ENCODE measurements at regions of chr4 and their contacts with region 1.

Region 1: GRCh38 chr4:141307241-141307689 is 86.6 kb downstream of the ZNF330 start:
- DNase-seq: peak; percentile 8
- H3K4me3 ChIP-seq: no peak overlapping the region
- H3K27ac ChIP-seq: no peak overlapping the region
- H3K27me3 ChIP-seq: no peaks in the 10 kb centered on the region
- CTCF ChIP-seq: peak; percentile 75

Region 2: GRCh38 chr4:141133146-141133998 is 173.9 kb before region 1 on chr4 and contains the start of gene RNF150:
- CTCF ChIA-PET with region 1: no interaction called
- POLR2A ChIA-PET with region 1: no interaction called
- DNase-seq: peak; percentile 78
- H3K4me3 ChIP-seq: peak within 1 kb of the TSS; percentile 82
- H3K27ac ChIP-seq: no peak within 1 kb of the TSS
- H3K27me3 ChIP-seq: no peaks in the 10 kb centered on the region
- CTCF ChIP-seq: peak; percentile 87
- polyA plus RNA-seq, gene RNF150: 9.8 and 10.3 TPM in 2 replicates

Region 3: DNA sequence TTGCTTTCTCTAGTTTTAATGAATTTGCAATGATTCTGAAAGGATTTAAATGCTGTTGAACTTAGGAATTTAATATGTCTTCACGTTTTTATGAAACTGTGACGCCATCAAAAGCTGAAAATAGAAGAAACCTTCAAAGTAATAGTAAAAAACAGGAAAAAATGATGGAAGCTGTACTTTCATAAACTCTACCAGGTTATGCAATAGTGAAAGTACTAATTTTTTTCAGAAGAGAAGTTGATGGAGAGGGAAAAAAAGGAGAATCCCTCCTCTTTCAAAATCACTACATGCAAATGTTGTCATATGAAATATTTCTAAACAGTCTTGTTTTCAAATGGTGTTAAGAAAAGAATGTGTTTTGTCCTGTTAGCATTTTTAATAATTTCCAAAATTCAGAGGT is 13.0 kb before region 1 on chr4:
- CTCF ChIA-PET with region 1: interaction called, 13 read pairs
- POLR2A ChIA-PET with region 1: no interaction called
- DNase-seq: no peak
- H3K4me3 ChIP-seq: no peak overlapping the region
- H3K27ac ChIP-seq: no peak overlapping the region
- H3K27me3 ChIP-seq: no peaks in the 10 kb centered on the region
- CTCF ChIP-seq: no peak

Measured in AG04450 (cell line).